Caco-2 (cell line): ENCODE measurements at regions of chr9 and their contacts with region 1.

Region 1: GRCh38 chr9:109520478-109521132 is 22.5 kb upstream of the PTPN3 start:
- DNase-seq: peak; percentile 76 to 79
- H3K4me3 ChIP-seq: no peak overlapping the region
- H3K4me3 Mint-ChIP-seq: no peak overlapping the region
- H3K27ac Mint-ChIP-seq: no peak overlapping the region
- H3K4me1 ChIP-seq: peaks cover 5% of the 10 kb centered on the region; the same call in 1 of the 2 replicates
- H3K4me1 Mint-ChIP-seq: no peaks in the 10 kb centered on the region
- H3K27me3 ChIP-seq: no peaks in the 10 kb centered on the region
- H3K27me3 Mint-ChIP-seq: peaks cover 5% of the 10 kb centered on the region
- CTCF ChIP-seq: peak; percentile 87 to 90

Region 2: DNA sequence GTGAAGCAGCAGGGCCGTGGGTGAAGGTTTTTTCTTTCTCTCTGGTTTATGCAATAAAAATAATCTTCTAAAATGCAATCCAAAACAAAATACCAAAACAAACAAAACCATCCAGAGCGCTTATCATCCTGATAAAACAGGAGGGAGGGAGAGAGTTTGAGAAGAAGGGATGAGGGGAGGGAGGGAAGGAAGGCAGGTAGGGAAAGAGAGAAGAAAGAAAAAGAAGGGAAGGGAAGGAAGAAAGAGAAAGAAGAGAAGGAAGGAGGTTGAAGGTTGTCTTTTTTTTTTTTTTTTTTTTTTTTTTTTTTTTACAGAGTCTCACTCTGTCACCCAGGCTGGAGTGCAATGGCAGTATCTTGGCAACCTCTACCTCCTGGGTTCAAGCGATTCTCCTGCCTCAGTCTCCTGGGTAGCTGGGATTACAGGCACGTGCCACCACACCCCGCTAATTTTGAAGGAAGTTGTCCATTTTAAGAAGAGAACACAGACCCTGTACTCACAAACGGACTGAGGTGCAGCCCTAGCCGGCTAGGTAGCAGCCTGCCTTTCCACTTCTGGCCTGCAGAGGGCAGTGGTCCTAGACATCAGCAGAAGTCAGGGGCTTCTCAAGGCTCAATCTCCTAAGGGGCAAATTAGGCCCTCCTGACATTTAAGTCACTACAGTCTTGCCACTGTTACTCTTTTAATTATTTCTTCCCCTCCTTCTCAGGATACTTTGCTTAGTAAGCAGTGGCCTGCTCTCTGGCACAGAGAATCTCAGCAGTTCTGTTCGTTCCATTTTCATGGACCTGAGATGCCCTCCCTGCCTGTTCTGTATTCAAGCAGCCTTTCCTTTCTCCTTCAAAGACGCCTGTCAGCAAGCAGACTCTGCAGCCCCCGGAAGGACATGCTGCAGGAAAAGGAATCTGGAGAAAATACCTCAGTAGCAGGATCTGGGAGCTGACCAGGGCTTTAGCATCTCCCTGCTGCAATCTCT is 276.2 kb before region 1 on chr9:
- CTCF ChIA-PET with region 1: no interaction called
- POLR2A ChIA-PET with region 1: no interaction called
- intact Hi-C with region 1: loop called (anchors 10 kb)
- DNase-seq: peak; percentile 78 to 82
- H3K4me3 ChIP-seq: no peak overlapping the region
- H3K4me3 Mint-ChIP-seq: no peak overlapping the region
- H3K27ac Mint-ChIP-seq: no peak overlapping the region
- H3K4me1 ChIP-seq: no peaks in the 10 kb centered on the region
- H3K4me1 Mint-ChIP-seq: no peaks in the 10 kb centered on the region
- H3K27me3 ChIP-seq: no peaks in the 10 kb centered on the region
- H3K27me3 Mint-ChIP-seq: no peaks in the 10 kb centered on the region
- CTCF ChIP-seq: peak; percentile 95 to 96

Region 3: GRCh38 chr9:109453210-109453842 is 67.3 kb before region 1 on chr9:
- CTCF ChIA-PET with region 1: interaction called, 3 read pairs
- POLR2A ChIA-PET with region 1: no interaction called
- intact Hi-C with region 1: loop called (anchors 1 kb)
- DNase-seq: peak; percentile 57 to 65
- H3K4me3 ChIP-seq: no peak overlapping the region
- H3K4me3 Mint-ChIP-seq: peak overlapping the region; percentile 3
- H3K27ac Mint-ChIP-seq: peak overlapping the region; percentile 84
- H3K4me1 ChIP-seq: peaks cover 24% of the 10 kb centered on the region
- H3K4me1 Mint-ChIP-seq: peaks cover 29% of the 10 kb centered on the region
- H3K27me3 ChIP-seq: no peaks in the 10 kb centered on the region
- H3K27me3 Mint-ChIP-seq: no peaks in the 10 kb centered on the region
- CTCF ChIP-seq: no peak

Region 4: GRCh38 chr9:109477258-109478050 is 43.2 kb before region 1 on chr9:
- CTCF ChIA-PET with region 1: interaction called, 4 read pairs
- POLR2A ChIA-PET with region 1: no interaction called
- intact Hi-C with region 1: loop called (anchors 1 kb)
- DNase-seq: peak; percentile 94 to 97
- H3K4me3 ChIP-seq: peak overlapping the region; percentile 19; the same call in 1 of the 2 replicates
- H3K4me3 Mint-ChIP-seq: peak overlapping the region; percentile 59
- H3K27ac Mint-ChIP-seq: peak overlapping the region; percentile 96
- H3K4me1 ChIP-seq: peaks cover 36% of the 10 kb centered on the region
- H3K4me1 Mint-ChIP-seq: peaks cover 38% of the 10 kb centered on the region
- H3K27me3 ChIP-seq: no peaks in the 10 kb centered on the region
- H3K27me3 Mint-ChIP-seq: no peaks in the 10 kb centered on the region
- CTCF ChIP-seq: no peak

Region 5: GRCh38 chr9:109507421-109507838 is 13.2 kb before region 1 on chr9:
- CTCF ChIA-PET with region 1: interaction called, 4 read pairs
- POLR2A ChIA-PET with region 1: no interaction called
- intact Hi-C with region 1: loop called (anchors 2 kb)
- DNase-seq: peak; percentile 60 to 61
- H3K4me3 ChIP-seq: no peak overlapping the region
- H3K4me3 Mint-ChIP-seq: no peak overlapping the region
- H3K27ac Mint-ChIP-seq: no peak overlapping the region
- H3K4me1 ChIP-seq: peaks cover 17% of the 10 kb centered on the region
- H3K4me1 Mint-ChIP-seq: peaks cover 15% of the 10 kb centered on the region
- H3K27me3 ChIP-seq: no peaks in the 10 kb centered on the region
- H3K27me3 Mint-ChIP-seq: no peaks in the 10 kb centered on the region
- CTCF ChIP-seq: no peak

Region 6: GRCh38 chr9:109542906-109543305 is 22.3 kb after region 1 on chr9:
- CTCF ChIA-PET with region 1: no interaction called
- POLR2A ChIA-PET with region 1: no interaction called
- intact Hi-C with region 1: no loop called
- DNase-seq: no peak
- H3K4me3 ChIP-seq: no peak overlapping the region
- H3K4me3 Mint-ChIP-seq: no peak overlapping the region
- H3K27ac Mint-ChIP-seq: no peak overlapping the region
- H3K4me1 ChIP-seq: no peaks in the 10 kb centered on the region
- H3K4me1 Mint-ChIP-seq: no peaks in the 10 kb centered on the region
- H3K27me3 ChIP-seq: no peaks in the 10 kb centered on the region
- H3K27me3 Mint-ChIP-seq: peaks cover 11% of the 10 kb centered on the region
- CTCF ChIP-seq: no peak